Naive thymus-derived CD4-positive, alpha-beta T cell (primary cell): ENCODE measurements at regions of chr17 and their contacts with region 1.

Region 1: GRCh38 chr17:31487648-31488263 is 96.3 kb downstream of the RAB11FIP4 start:
- DNase-seq: peak; percentile 88 to 95 (median 92)
- ATAC-seq: peak; percentile 94
- H3K4me3 ChIP-seq: peak overlapping the region; percentile 79
- H3K4me3 Mint-ChIP-seq: peak overlapping the region; percentile 85 to 98 (median 92)
- H3K27ac ChIP-seq: peak overlapping the region; percentile 90
- H3K27ac Mint-ChIP-seq: peak overlapping the region; percentile 78 to 98 (median 94)
- H3K4me1 ChIP-seq: peaks cover 40 to 43% of the 10 kb centered on the region in 2 donors
- H3K4me1 Mint-ChIP-seq: peaks cover 44 to 52% (median 48%) of the 10 kb centered on the region in 7 donors
- H3K27me3 ChIP-seq: no peaks in the 10 kb centered on the region
- H3K27me3 Mint-ChIP-seq: peaks cover 0 to 9% (median 0%) of the 10 kb centered on the region in 5 donors

Region 2: DNA sequence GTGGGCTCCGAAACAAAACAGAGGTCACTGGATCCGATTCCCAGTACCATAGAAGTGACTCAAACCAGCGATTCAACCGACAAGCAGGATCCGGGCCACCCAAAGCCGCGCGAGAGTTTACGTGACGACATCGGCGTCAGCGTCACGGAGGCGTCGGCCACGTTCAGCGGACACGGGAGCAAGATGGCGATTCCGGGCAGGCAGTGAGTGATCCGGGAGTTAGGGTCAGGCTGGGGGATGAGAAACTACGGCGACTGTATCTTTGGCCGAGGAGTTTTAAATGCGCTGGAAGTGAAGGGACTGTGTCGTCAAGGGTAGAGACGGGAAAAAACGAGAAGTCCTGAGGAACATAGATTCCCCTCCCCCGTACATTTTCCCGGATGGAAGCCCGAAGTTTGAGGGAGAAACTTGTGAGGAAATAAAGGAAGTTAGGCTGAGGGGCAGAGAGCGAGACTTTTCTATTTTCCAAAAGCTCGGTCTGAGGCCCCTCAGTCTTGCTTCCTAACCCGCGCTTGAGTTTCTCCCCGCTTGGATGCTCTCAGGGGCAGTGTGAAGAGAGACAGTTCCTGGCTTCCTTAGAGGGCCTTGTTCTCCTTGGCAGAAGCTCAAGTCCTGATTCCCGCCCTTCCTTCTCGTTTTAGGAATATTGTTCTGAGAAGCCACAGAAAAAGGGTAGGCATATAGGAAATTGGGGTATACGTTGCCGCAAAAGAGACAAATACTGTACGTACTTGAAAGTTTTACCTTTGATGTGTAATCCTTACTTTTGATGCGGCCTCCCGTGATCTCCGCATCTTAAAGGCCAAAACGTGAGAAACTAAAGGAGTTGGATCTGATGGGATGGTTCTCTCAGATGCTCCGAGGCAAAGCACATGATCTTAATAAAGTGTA is 1370.8 kb before region 1 on chr17 and contains the start of gene NSRP1:
- CTCF ChIA-PET with region 1: no interaction called
- POLR2A ChIA-PET with region 1: no interaction called
- intact Hi-C with region 1: loop called in 1 of 2 experiments (anchors 10 kb)
- DNase-seq: peak; percentile 82 to 93 (median 90)
- ATAC-seq: peak; percentile 99
- H3K4me3 ChIP-seq: peak within 1 kb of the TSS; percentile 96
- H3K4me3 Mint-ChIP-seq: peak within 1 kb of the TSS; percentile 91 to 100 (median 98)
- H3K27ac ChIP-seq: peak within 1 kb of the TSS; percentile 97
- H3K27ac Mint-ChIP-seq: peak within 1 kb of the TSS; percentile 97 to 100 (median 100)
- H3K4me1 ChIP-seq: peaks cover 3 to 10% of the 10 kb centered on the region in 2 donors
- H3K4me1 Mint-ChIP-seq: peaks cover 20 to 57% (median 48%) of the 10 kb centered on the region in 7 donors
- H3K27me3 ChIP-seq: no peaks in the 10 kb centered on the region
- H3K27me3 Mint-ChIP-seq: no peaks in the 10 kb centered on the region
- total RNA-seq, gene NSRP1: 25.6 to 34.7 (median 29.3) TPM

Region 3: DNA sequence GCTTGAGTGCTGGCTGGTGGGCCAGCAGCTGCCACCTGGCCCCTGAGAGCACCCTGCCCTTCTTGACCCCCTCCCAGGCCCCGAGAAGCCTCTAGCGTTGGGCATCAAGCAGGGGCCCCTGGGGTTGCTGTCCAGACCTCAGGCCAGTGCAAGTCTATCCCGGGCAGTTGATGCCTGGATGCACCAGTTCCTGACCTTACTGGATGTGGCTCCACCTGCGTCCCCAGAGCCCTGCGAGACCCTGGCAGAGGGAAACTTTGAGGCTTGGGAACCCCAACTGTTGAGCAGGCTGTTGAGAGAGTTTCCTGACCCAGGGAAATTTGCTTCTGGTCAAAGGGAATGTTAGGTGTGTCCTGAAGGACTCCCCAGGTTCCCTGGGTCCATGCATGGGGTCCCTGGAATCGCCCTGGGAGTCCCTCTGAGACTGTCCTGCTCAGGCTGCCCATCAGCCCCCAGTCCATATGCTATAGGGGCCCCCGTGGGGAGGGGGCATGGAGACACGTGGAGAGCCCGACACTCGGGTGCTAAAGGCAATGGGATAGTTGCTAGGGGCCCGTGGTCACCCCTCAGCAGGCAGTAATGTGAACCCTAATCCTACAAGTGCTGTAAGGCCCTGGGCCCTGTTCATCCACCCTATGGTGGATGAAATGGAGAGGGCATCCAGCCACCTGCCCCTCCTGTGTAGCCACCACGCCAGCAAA is 49.9 kb before region 1 on chr17:
- CTCF ChIA-PET with region 1: interaction called, 3 read pairs
- POLR2A ChIA-PET with region 1: interaction called, 3 read pairs
- intact Hi-C with region 1: loop called (anchors 1 to 5 kb)
- DNase-seq: no peak
- ATAC-seq: no peak
- H3K4me3 ChIP-seq: no peak overlapping the region
- H3K4me3 Mint-ChIP-seq: no peak overlapping the region
- H3K27ac ChIP-seq: no peak overlapping the region
- H3K27ac Mint-ChIP-seq: no peak overlapping the region
- H3K4me1 ChIP-seq: peaks cover 8% of the 10 kb centered on the region in 2 donors
- H3K4me1 Mint-ChIP-seq: peaks cover 0 to 17% (median 15%) of the 10 kb centered on the region in 7 donors
- H3K27me3 ChIP-seq: no peaks in the 10 kb centered on the region
- H3K27me3 Mint-ChIP-seq: peaks cover 0 to 13% (median 0%) of the 10 kb centered on the region in 5 donors

Region 4: DNA sequence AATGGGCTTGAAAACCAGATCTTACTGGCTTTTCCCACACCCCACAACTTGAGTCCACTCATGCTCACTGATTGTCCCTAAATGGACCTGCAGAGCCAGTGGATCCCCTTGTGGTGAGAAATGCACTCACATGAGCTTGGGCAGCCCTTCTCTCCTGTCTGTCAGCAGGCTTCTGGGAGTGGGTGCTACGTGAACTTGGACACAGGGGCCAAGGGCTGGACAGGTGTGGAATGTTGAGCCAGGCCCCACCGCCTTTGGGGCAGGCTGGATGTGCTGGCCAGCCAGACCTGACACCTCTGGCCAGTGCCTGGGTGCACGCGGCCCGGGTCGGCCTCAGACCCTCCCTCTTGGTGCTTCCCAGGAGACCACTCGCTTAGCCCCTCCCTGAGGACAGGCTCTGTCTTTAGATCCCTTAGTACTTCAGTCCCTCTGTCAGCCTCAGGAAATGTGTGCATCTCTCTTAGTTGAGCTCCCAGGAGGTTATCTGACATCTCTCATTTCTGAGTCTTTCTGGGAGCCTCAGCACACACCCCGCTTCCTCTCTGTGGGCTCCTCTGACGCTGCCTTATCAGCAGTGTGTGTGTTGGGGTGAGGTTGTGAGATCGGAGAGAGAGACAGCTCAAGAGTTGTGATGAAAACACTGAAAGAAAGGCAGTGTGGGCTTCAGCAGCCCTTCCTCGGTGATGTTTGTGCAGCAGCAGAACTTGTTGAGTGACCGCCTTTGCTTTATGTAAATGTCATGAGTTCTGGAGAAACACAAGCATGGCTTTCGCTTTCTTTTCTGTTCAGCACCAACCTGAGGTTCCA is 20.7 kb after region 1 on chr17:
- CTCF ChIA-PET with region 1: interaction called, 32 read pairs
- POLR2A ChIA-PET with region 1: interaction called, 176 read pairs
- intact Hi-C with region 1: loop called (anchors 1 kb)
- DNase-seq: peak in 8 of 9 donors; percentile 66 to 90 (median 85)
- ATAC-seq: peak; percentile 95
- H3K4me3 ChIP-seq: peak overlapping the region; percentile 62
- H3K4me3 Mint-ChIP-seq: peak overlapping the region; percentile 79 to 95 (median 90)
- H3K27ac ChIP-seq: peak overlapping the region; percentile 86
- H3K27ac Mint-ChIP-seq: peak overlapping the region; percentile 94 to 100 (median 97)
- H3K4me1 ChIP-seq: peaks cover 53 to 55% of the 10 kb centered on the region in 2 donors
- H3K4me1 Mint-ChIP-seq: peaks cover 50 to 80% (median 69%) of the 10 kb centered on the region in 7 donors
- H3K27me3 ChIP-seq: no peaks in the 10 kb centered on the region
- H3K27me3 Mint-ChIP-seq: no peaks in the 10 kb centered on the region

Region 5: DNA sequence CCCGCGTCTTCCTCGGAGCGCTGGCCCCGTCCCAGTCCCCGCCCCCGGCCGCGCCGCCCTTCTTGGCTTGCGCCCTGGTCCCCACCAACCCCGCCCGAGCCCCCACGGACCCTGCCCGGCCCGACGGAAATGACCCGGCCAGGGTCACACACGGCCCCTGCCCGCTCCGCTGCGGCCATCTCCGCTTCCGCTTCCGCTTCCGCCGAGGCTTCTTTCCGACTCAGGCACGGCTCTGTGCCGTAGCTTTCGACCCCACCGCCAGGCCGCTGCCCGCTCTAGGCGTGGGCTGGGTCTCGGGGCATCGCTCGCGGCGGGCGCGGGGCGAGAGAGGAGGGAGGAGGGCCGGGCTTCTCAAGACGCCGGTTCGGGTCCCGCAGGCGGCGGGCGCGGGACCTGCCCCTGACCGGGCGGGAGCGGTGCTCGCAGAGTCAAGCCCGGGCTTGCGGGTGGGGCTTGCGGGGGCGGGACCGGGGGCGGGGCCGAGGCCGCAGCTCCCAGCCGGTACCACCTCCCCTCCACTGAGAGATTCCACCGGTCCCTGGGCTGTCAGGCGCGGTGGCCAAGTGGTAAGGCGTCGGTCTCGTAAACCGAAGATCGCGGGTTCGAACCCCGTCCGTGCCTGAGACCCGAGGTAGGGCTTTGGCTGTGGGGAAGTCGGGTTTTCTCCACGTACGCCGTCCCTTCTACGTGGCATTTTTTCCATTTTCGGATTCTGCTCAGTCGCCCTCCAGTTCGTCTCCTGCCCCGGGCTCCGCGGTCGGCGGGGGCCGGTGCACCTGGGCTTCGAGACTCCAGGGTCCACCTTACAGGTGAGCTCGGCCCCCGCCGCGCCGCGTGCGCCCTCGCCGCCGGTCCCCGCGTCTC is 62.0 kb after region 1 on chr17:
- CTCF ChIA-PET with region 1: no interaction called
- POLR2A ChIA-PET with region 1: no interaction called
- intact Hi-C with region 1: loop called (anchors 1 to 2 kb)
- DNase-seq: peak; percentile 75 to 98 (median 85)
- ATAC-seq: peak; percentile 93
- H3K4me3 ChIP-seq: peak overlapping the region; percentile 77
- H3K4me3 Mint-ChIP-seq: peak overlapping the region; percentile 84 to 94 (median 92)
- H3K27ac ChIP-seq: peak overlapping the region; percentile 75
- H3K27ac Mint-ChIP-seq: peak overlapping the region; percentile 71 to 93 (median 84)
- H3K4me1 ChIP-seq: peaks cover 0 to 8% of the 10 kb centered on the region in 2 donors
- H3K4me1 Mint-ChIP-seq: peaks cover 8 to 25% (median 18%) of the 10 kb centered on the region in 7 donors
- H3K27me3 ChIP-seq: no peaks in the 10 kb centered on the region
- H3K27me3 Mint-ChIP-seq: peaks cover 0 to 24% (median 0%) of the 10 kb centered on the region in 5 donors

Region 6: GRCh38 chr17:31900877-31901276 is 413.1 kb after region 1 on chr17:
- CTCF ChIA-PET with region 1: no interaction called
- POLR2A ChIA-PET with region 1: no interaction called
- intact Hi-C with region 1: loop called in 1 of 2 experiments (anchors 2 kb)
- DNase-seq: peak in 1 of 9 donors; percentile 9
- ATAC-seq: no peak
- H3K4me3 ChIP-seq: peak overlapping the region; percentile 80
- H3K4me3 Mint-ChIP-seq: no peak overlapping the region
- H3K27ac ChIP-seq: peak overlapping the region; percentile 81
- H3K27ac Mint-ChIP-seq: no peak overlapping the region
- H3K4me1 ChIP-seq: peaks cover 0 to 10% of the 10 kb centered on the region in 2 donors
- H3K4me1 Mint-ChIP-seq: peaks cover 0 to 25% (median 9%) of the 10 kb centered on the region in 7 donors
- H3K27me3 ChIP-seq: no peaks in the 10 kb centered on the region
- H3K27me3 Mint-ChIP-seq: no peaks in the 10 kb centered on the region